ENCODE measurements at regions of chrX and their contacts with region 1.

Region 1: DNA sequence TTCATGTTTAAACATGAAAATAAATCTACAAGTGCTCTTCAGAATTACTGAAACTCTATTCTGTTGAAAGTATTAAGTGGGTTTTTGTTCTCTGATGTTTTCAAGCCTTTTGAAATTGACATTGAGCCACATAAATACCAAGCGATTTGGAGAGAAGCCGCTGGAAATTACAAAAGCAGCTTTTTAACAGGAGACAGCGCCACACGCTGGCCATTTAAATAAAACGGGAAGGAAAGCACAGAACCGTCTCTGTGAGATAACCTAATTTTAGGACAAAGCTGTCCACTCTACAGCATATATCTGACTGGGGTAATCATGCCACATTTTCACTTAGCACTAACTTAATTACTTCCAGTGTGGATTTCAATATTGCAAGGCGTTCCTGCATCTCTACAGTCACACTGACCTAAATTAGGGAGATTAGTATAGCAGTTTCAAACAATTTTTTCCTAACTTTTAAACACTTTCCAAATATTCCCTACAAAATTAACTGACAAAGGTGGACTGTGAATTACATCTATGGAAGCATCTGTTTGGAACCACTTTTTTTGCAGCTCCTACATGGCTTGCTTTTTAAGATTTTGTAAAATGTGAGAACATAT is 6.8 kb upstream of the ANOS1 start:
- DNase-seq: no peak
- ATAC-seq: no peak

Region 2: DNA sequence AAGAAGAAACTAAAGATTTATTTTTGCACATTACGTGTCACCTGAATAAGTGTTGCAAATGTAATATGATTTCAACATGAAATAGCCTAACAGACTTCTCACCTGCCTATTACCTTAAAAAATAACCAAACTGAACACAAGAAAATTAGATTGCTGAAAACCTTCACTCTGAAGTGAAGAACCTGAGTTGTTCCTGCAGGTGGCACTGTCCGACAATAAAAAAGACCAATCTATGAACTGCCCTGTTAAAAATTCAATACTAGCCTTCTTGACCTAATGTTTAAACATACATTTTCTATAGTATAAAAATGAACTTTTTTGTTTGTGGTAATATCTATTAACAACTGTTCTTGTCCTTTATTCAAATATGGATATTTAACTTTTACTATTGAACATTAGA is 742.3 kb before region 1 on chrX:
- intact Hi-C with region 1: loop called (anchors 5 kb)
- DNase-seq: no peak
- ATAC-seq: peak; percentile 67

Region 3: DNA sequence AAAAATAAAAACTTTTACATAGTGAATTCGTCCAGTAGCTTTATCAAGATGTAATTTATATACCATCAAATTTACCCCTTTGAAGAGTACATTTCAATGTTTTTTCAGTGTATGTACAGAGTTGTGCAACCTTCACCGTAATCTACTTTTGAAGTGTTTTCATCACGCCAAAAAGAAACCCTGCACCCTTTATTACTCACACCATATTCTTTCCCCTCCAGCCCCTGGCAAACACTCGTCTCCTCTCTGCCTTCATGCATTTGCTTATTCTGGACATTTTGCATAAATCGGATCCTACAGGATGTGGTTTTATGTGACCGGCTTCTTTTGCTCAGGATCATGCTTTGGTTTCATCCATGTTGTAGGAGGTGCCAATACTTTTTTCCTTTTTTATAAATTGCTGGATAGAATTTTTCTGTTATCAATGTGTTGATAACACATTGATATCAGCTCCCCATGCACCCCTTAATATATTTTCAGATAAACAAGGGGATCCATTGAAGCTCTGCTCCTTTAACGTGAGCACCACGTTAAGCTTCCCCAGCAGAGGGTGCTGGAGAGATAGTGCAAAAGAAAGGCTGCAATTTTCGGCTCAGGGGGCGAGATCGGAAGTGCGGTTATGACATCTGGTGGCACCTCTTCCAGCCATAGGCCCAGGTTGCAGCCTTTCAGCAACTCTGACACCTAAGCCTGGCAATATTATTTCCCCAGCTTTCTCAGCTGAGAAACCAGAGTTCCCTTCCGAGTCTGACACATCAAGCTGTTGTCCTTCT is 374.1 kb before region 1 on chrX:
- intact Hi-C with region 1: loop called (anchors 10 kb)
- DNase-seq: peak; percentile 39
- ATAC-seq: peak; percentile 31

Region 4: DNA sequence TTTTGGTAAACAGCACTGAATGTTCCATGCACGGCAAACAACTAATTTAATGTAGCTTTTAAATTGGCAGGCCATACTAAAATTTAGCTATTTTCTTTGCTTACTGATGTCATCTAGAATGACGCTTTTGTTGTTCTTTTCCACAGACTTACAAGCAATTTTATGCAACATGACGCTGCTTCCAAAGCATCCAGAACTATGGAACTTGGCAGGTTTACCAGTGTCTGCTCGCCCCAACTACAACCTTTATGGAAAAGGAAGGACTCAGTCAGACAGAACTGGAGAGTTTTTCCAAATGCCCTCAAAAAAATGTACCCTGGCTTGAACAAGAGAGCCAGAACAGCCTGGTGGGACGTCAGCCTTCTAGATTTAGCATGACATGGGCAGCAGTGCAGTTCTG is 65.5 kb before region 1 on chrX:
- intact Hi-C with region 1: no loop called
- DNase-seq: no peak
- ATAC-seq: peak; percentile 46

Measured in Right ventricle myocardium superior (tissue), 1 donor.